ENCODE measurements at regions of chr7 and their contacts with region 1.

Region 1: GRCh38 chr7:79361214-79361613 is 92.3 kb downstream of the MAGI2 start:
- DNase-seq: peak; percentile 5
- H3K4me3 ChIP-seq: no peak overlapping the region
- H3K27ac ChIP-seq: no peak overlapping the region
- H3K4me1 ChIP-seq: no peaks in the 10 kb centered on the region
- H3K27me3 ChIP-seq: peaks cover 61% of the 10 kb centered on the region
- CTCF ChIP-seq: peak; percentile 33

Region 2: GRCh38 chr7:79622781-79623180 is 261.6 kb after region 1 on chr7:
- CTCF ChIA-PET with region 1: no interaction called
- POLR2A ChIA-PET with region 1: interaction called, 11 read pairs
- intact Hi-C with region 1: no loop called
- DNase-seq: no peak
- H3K4me3 ChIP-seq: no peak overlapping the region
- H3K27ac ChIP-seq: no peak overlapping the region
- H3K4me1 ChIP-seq: no peaks in the 10 kb centered on the region
- H3K27me3 ChIP-seq: no peaks in the 10 kb centered on the region
- CTCF ChIP-seq: no peak